ENCODE measurements at regions of chr6 and their contacts with region 1.

Region 1: DNA sequence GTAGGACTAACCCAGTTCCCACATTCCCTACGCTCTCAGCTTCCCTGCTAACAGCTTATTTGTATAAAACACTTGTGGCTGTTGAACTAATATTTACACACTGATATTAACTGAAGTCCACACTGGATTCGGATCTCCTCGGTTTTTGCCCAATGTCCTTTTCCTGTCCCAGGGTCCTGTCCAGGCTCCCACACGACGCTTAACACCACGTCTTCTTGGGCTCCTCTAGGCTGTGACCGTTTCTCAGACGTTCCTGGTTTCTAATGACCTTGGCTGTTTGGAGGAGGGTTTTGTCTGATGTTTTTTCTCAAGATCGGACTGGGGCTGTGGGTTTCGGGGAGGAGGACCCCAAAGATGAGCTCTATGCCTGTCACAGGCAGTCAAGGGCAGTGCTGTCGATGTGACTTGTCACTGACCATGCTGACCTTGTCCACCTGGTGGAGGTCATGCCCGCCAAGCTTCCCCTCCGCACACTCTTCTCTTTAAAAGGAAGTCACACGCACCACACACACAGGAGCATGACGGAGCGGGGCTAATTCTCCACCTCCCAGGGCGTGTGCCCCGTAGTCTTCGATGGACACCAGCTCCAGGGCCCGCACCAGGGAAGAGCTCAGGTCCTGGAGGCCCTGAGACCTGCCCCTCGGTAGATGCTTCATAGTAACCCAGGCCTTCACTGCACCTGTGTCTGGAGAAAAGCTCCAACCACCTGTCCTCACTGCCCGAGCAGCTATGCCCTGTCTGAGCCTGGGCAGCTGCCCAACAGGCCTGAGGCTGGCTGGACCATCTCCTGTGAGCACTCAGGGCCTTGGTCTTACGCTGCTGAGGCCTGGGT is 72.0 kb downstream of the TTLL2 start:
- DNase-seq: peak; percentile 48
- ATAC-seq: peak; percentile 29
- H3K4me3 ChIP-seq: no peak overlapping the region
- H3K27ac ChIP-seq: no peak overlapping the region
- H3K4me1 ChIP-seq: no peaks in the 10 kb centered on the region
- H3K27me3 ChIP-seq: no peaks in the 10 kb centered on the region
- CTCF ChIP-seq: no peak

Region 2: GRCh38 chr6:166956444-166957086 is 440.3 kb before region 1 on chr6 and contains the start of gene RNASET2:
- intact Hi-C with region 1: no loop called
- DNase-seq: peak; percentile 99
- ATAC-seq: peak; percentile 97
- H3K4me3 ChIP-seq: peak within 1 kb of the TSS; percentile 94
- H3K27ac ChIP-seq: peak within 1 kb of the TSS; percentile 93
- H3K4me1 ChIP-seq: peaks cover 23% of the 10 kb centered on the region
- H3K27me3 ChIP-seq: no peaks in the 10 kb centered on the region
- CTCF ChIP-seq: no peak
- total RNA-seq, gene RNASET2: 73.1 TPM

Region 3: GRCh38 chr6:167214206-167214605 is 182.7 kb before region 1 on chr6:
- intact Hi-C with region 1: no loop called
- DNase-seq: no peak
- ATAC-seq: no peak
- H3K4me3 ChIP-seq: no peak overlapping the region
- H3K27ac ChIP-seq: no peak overlapping the region
- H3K4me1 ChIP-seq: no peaks in the 10 kb centered on the region
- H3K27me3 ChIP-seq: no peaks in the 10 kb centered on the region
- CTCF ChIP-seq: no peak

Region 4: DNA sequence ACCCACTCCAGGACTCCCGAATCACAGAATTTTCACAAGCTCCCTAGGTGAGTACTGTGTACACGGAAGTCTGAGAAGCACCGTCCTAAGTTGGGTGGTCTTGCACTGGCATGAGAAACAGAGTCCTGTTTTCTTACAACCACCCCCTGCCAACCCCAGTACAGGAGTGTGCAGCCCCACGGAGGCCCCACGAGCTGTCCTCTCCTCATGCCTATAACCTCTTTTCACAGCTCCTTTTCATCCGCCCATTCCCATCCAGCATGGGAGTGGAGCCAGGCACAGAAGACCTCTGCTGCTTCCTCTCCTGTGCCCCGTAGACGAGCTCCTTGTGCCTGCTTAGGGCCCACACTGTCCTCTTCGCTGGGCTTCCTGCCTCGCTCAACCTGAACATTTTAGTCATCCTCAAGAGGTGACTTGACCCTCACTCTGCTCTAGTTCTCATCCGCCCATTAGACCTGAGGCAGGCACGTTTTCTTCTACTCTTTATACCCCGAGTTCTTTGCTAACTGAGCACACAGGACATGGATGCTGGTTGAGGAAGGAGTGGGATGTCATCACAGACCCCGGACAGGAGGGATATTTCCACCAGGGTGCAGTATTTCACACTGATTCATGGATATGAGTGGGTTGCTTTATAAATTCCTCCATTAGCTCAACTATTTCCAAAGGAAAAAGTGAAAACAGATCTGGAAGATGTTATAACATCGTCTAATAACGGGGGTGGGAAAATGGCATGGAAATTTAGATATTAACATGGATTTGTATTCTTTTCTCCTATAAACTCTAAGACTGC is 88.5 kb after region 1 on chr6:
- intact Hi-C with region 1: no loop called
- DNase-seq: no peak
- ATAC-seq: peak; percentile 75
- H3K4me3 ChIP-seq: no peak overlapping the region
- H3K27ac ChIP-seq: no peak overlapping the region
- H3K4me1 ChIP-seq: no peaks in the 10 kb centered on the region
- H3K27me3 ChIP-seq: no peaks in the 10 kb centered on the region
- CTCF ChIP-seq: peak; percentile 56

Region 5: GRCh38 chr6:168050881-168051586 is 654.2 kb after region 1 on chr6:
- intact Hi-C with region 1: loop called (anchors 10 kb)
- DNase-seq: no peak
- ATAC-seq: peak; percentile 5
- H3K4me3 ChIP-seq: no peak overlapping the region
- H3K27ac ChIP-seq: no peak overlapping the region
- H3K4me1 ChIP-seq: peaks cover 5% of the 10 kb centered on the region
- H3K27me3 ChIP-seq: no peaks in the 10 kb centered on the region
- CTCF ChIP-seq: peak; percentile 20